GM23248 (cell line): ENCODE measurements at regions of chr10 and their contacts with region 1.

Region 1: DNA sequence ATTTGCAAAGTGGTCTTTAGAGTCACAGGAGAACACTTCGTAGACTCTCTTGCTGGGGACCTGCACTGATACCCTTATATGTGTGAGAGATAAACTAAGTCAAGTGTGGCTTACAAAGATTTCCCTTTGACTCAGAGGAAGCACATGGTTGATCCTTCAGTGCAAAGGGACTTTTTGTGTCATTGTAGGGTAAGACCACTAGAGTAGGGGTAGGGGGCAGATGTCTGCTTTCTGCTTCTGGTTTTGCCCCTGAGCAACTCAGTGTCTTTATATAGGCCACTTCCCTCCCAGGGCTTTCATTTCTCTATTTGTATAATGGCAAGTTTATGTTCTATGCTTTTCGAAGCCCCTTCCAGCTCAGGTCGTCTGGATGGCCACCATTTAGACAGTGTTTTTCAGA is 281.7 kb downstream of the SORCS3 start:
- DNase-seq: no peak
- H3K4me3 ChIP-seq: no peak overlapping the region
- H3K27ac ChIP-seq: no peak overlapping the region
- H3K4me1 ChIP-seq: no peaks in the 10 kb centered on the region
- H3K27me3 ChIP-seq: no peaks in the 10 kb centered on the region

Region 2: GRCh38 chr10:104406715-104407650 is 515.8 kb before region 1 on chr10:
- in situ Hi-C with region 1: loop called (anchors 25 kb)
- DNase-seq: peak; percentile 78
- H3K4me3 ChIP-seq: no peak overlapping the region
- H3K27ac ChIP-seq: no peak overlapping the region
- H3K4me1 ChIP-seq: no peaks in the 10 kb centered on the region
- H3K27me3 ChIP-seq: no peaks in the 10 kb centered on the region